Activated CD4-positive, alpha-beta T cell treated with anti-CD3 and anti-CD28 coated beads for 36 hours (primary cell): ENCODE measurements at regions of chr3 and their contacts with region 1.

Region 1: GRCh38 chr3:27681245-27681748 is 40.8 kb downstream of the EOMES start:
- DNase-seq: peak; percentile 49
- ATAC-seq: peak; percentile 84
- H3K4me3 Mint-ChIP-seq: peak overlapping the region; percentile 44
- H3K27ac Mint-ChIP-seq: peak overlapping the region; percentile 80
- H3K4me1 Mint-ChIP-seq: peaks cover 8% of the 10 kb centered on the region
- H3K27me3 Mint-ChIP-seq: no peaks in the 10 kb centered on the region

Region 2: DNA sequence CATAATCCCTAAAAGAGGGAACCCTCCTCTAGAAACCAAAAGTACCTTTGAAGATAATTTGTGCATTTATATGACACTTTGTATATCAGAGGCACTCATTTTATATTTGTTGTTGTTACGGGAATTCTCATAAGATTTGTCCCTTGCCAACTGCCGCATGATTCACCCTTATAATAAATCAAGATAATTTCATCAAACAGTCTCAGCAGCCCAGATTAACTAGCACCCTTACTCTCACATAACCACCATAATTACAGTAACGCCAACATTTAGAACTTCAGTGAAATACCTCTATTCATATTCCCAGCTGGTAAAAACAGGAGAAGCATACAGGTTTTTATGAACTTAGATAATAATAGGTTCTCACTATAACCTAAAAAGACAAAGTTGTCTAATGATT is 786.9 kb before region 1 on chr3:
- CTCF ChIA-PET with region 1: no interaction called
- POLR2A ChIA-PET with region 1: no interaction called
- intact Hi-C with region 1: no loop called
- DNase-seq: no peak
- ATAC-seq: no peak
- H3K4me3 Mint-ChIP-seq: no peak overlapping the region
- H3K27ac Mint-ChIP-seq: no peak overlapping the region
- H3K4me1 Mint-ChIP-seq: no peaks in the 10 kb centered on the region
- H3K27me3 Mint-ChIP-seq: no peaks in the 10 kb centered on the region

Region 3: GRCh38 chr3:27312044-27312668 is 369.1 kb before region 1 on chr3:
- CTCF ChIA-PET with region 1: interaction called, 3 read pairs
- POLR2A ChIA-PET with region 1: no interaction called
- intact Hi-C with region 1: loop called (anchors 1 kb)
- DNase-seq: no peak
- ATAC-seq: peak; percentile 63
- H3K4me3 Mint-ChIP-seq: no peak overlapping the region
- H3K27ac Mint-ChIP-seq: no peak overlapping the region
- H3K4me1 Mint-ChIP-seq: no peaks in the 10 kb centered on the region
- H3K27me3 Mint-ChIP-seq: peaks cover 2% of the 10 kb centered on the region

Region 4: DNA sequence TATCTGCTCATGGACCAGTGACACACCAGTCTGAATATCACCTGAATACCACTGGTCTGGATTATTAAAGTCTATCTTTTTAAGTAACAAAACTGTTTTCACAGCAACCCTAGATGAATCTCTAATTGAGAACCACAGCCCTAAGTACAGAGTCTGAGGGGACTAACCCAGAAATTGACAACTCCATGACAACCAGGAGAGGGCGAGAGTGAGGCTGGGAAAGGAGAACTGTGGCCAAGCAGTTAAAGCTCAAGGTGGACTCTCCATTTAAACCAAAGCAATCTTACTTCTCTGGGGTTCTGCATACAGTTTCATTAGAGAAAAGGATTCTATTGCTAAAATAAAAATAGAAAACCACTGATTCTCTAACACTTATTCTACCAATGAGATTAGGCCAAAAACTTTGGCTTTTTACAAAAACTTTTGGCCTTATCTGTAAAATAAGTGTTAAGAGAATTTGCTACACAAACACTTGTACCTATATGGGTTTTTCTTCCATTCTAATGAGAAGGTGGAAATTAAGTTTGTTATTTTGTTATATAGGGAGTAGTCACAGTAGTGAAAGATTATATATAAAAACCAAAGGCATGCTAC is 323.5 kb before region 1 on chr3:
- CTCF ChIA-PET with region 1: interaction called, 7 read pairs
- POLR2A ChIA-PET with region 1: no interaction called
- intact Hi-C with region 1: loop called (anchors 1 to 2 kb)
- DNase-seq: peak; percentile 77
- ATAC-seq: peak; percentile 94
- H3K4me3 Mint-ChIP-seq: no peak overlapping the region
- H3K27ac Mint-ChIP-seq: no peak overlapping the region
- H3K4me1 Mint-ChIP-seq: peaks cover 26% of the 10 kb centered on the region
- H3K27me3 Mint-ChIP-seq: no peaks in the 10 kb centered on the region

Region 5: DNA sequence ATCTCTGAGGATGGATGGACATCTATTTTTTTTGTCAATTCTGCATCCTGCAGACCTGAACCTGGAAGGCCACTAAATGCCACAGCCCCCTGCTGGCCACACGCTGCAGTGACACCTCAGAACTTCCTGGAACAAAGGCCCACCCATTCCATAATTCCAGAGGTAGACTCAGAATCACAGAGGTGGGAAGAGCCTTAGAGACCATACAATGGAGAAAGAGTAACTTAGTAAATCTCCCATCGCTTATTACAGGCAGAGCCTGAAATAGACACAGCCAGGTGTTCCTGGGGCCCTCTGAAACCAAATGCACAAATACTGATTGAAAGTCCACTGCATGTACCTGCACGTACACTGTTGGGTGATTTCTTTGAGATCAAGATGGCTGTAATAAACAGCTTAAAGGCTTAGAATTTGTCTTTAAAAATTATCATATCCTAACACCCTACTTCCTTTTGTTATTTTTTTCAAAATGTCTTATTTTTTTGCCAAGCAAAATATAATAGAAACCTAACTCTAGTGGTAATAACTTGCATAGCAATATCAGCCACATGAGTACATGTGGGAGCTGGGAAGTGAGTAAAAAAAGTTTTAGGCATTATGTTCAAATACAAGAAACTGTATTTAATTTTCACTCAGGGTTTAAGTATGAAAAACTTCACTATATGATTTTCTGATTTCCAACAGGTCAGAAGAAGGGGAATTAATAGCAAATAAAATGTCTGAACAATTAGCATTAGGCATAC is 21.8 kb before region 1 on chr3:
- CTCF ChIA-PET with region 1: no interaction called
- POLR2A ChIA-PET with region 1: no interaction called
- intact Hi-C with region 1: no loop called
- DNase-seq: peak; percentile 61
- ATAC-seq: peak; percentile 65
- H3K4me3 Mint-ChIP-seq: no peak overlapping the region
- H3K27ac Mint-ChIP-seq: no peak overlapping the region
- H3K4me1 Mint-ChIP-seq: peaks cover 5% of the 10 kb centered on the region
- H3K27me3 Mint-ChIP-seq: no peaks in the 10 kb centered on the region

Region 6: GRCh38 chr3:27737091-27737490 is 55.8 kb after region 1 on chr3:
- CTCF ChIA-PET with region 1: no interaction called
- POLR2A ChIA-PET with region 1: no interaction called
- intact Hi-C with region 1: no loop called
- DNase-seq: no peak
- ATAC-seq: no peak
- H3K4me3 Mint-ChIP-seq: no peak overlapping the region
- H3K27ac Mint-ChIP-seq: no peak overlapping the region
- H3K4me1 Mint-ChIP-seq: no peaks in the 10 kb centered on the region
- H3K27me3 Mint-ChIP-seq: peaks cover 4% of the 10 kb centered on the region